Dorsolateral prefrontal cortex (tissue), 120 donors: ENCODE measurements at regions of chr14 and their contacts with region 1.

Region 1: DNA sequence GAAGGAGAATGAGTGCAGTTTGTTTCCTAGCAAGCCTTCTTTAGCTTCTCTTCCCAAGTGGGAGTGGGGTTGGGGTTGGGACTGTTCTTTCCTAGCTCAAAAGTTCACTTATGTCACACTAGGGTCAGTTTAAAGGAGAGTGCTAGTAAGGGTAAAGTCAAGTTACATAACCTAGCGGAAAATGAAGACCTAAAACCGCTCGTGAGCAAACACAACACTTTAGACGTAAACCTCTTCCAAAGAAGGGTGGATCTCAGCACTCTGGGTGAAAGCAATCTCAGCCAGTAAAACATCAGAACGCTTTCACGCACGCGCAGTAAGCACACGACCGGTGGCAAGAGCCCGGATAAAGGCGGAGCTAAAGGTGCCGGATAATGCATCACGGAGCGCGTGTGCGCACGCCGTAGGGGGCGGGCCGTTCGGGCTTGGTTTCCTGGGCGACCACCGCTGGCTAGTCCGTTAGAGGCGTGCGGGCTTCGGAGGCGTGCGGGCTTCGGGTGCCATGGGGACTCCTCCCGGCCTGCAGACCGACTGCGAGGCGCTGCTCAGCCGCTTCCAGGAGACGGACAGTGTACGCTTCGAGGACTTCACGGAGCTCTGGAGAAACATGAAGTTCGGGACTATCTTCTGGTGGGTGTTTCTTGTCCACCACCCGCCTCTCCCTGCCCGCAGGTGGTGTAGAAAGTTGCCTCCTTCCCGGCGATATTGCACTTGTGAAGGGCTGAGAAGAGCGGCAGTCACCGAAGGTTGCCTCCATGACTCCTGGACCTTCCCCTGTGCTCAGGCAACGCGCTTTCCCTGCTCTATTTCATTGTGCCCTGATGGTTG is at the start of gene SNAPC1:
- DNase-seq: peak; percentile 91 to 97 (median 96)
- H3K4me3 ChIP-seq: peak within 1 kb of the TSS; percentile 62 to 95 (median 84)
- H3K27ac ChIP-seq: peak within 1 kb of the TSS; percentile 59 to 96 (median 90)
- H3K27me3 ChIP-seq: peaks cover 0 to 5% (median 0%) of the 10 kb centered on the region in 45 donors
- CTCF ChIP-seq: peak in 25 of 56 donors; percentile 8 to 51 (median 27)
- total RNA-seq, gene SNAPC1: 2.2 to 6.6 (median 4.4) TPM

Region 2: GRCh38 chr14:61598980-61599379 is 163.2 kb before region 1 on chr14:
- intact Hi-C with region 1: no loop called
- DNase-seq: no peak
- H3K4me3 ChIP-seq: no peak overlapping the region
- H3K27ac ChIP-seq: peak overlapping the region in 2 of 59 donors; percentile 5 to 8
- H3K27me3 ChIP-seq: no peaks in the 10 kb centered on the region
- CTCF ChIP-seq: no peak

Region 3: GRCh38 chr14:61694830-61695694 is 67.1 kb before region 1 on chr14 and contains the start of gene HIF1A:
- intact Hi-C with region 1: loop called (anchors 5 kb)
- DNase-seq: peak; percentile 83 to 97 (median 94)
- H3K4me3 ChIP-seq: peak within 1 kb of the TSS; percentile 72 to 100 (median 96)
- H3K27ac ChIP-seq: peak within 1 kb of the TSS; percentile 68 to 100 (median 97)
- H3K27me3 ChIP-seq: no peaks in the 10 kb centered on the region
- CTCF ChIP-seq: peak in 43 of 56 donors; percentile 4 to 62 (median 32)
- total RNA-seq, gene HIF1A: 54.8 to 115 (median 81.7) TPM

Region 4: DNA sequence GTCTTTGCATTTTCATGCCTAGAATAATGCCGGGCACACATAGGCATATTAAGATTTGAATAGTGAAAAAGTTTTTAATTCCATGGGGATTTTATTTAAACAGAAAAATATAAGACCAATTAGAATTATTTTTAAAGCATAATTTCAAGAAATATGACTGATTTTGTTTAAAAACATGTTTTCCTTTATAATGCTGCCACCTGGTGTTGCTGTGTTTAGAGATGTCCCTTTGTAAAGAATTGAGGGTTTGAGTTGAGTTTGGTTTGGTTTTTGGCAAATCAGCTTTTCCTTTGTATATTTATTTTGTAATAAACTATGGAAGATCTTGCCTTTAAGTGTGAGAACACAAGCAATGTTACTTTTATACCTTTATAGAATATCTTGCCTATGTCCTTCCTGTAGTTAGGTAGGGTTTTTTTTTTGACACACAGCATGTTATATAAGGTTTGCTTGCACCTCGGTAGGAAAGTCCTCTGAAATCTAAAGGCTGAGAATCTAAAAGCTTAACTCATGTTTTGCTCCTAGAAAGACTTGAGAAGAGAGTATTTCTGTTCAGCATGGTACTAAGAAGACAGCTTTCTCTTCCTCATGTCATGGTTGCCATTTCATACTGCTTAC is 31.3 kb before region 1 on chr14:
- intact Hi-C with region 1: no loop called
- DNase-seq: no peak
- H3K4me3 ChIP-seq: no peak overlapping the region
- H3K27ac ChIP-seq: peak overlapping the region in 28 of 59 donors; percentile 5 to 67 (median 39)
- H3K27me3 ChIP-seq: no peaks in the 10 kb centered on the region
- CTCF ChIP-seq: peak; percentile 26 to 86 (median 70)